ENCODE measurements at regions of chr9 and their contacts with region 1.

Region 1: DNA sequence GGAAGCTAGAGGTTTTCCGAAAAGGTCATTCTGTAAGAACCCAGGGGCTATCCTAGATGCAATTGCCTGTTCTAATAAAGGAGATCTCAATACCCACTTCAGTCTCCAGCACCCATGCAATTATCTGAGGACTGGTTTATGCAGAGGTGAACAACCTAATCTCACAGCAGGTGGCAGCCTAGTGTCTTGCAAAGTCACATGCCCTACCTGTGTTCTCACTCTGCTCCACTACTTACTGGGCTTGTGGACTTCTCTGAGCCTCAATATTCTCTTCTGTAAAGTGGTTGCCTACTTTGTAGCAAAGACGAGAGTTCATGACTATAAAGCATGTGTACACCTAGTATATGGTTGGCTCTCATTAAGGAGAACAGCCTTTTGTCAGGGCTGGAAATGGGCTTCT is 21.0 kb upstream of the ALDH1B1 start:
- DNase-seq: no peak
- ATAC-seq: peak in 1 of 4 donors; percentile 39
- H3K4me3 ChIP-seq: no peak overlapping the region
- H3K27ac ChIP-seq: no peak overlapping the region
- H3K4me1 ChIP-seq: no peaks in the 10 kb centered on the region
- H3K27me3 ChIP-seq: no peaks in the 10 kb centered on the region
- CTCF ChIP-seq: peak in 1 of 12 donors; percentile 16
- POLR2A ChIP-seq: no peak

Region 2: DNA sequence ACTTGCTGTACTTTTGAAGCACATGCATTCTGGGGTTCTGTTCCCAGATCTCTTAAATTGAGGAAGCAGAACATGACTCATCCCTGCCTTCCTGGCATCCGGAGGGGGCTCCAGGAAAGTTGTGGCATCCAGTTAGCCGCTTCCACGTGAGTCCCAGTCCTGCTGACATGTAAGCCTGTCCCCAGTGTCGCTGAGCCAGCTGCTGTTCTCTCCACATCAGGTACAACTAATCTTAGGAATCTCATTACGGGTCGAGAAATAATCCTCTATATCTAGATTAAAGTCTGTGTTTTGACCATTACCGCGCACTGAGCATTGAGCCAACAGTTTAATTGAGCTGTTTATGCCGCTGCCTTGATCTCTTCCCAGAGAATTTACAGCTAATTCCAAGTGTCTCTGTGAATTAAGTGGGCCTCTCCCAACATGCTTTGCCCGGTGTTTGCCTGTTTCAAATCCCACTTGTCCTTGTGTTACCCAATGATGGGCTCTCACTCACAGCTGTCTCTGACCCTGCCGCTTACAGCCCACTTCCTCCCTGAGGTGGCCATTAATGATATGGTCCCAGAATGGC is 291.9 kb before region 1 on chr9:
- intact Hi-C with region 1: loop called in 2 of 10 experiments (anchors 5 to 10 kb)
- DNase-seq: peak in 2 of 5 donors; percentile 25 to 59
- ATAC-seq: peak in 3 of 4 donors; percentile 19 to 51 (median 38)
- H3K4me3 ChIP-seq: no peak overlapping the region
- H3K27ac ChIP-seq: peak overlapping the region in 1 of 12 donors; percentile 33
- H3K4me1 ChIP-seq: peaks cover 0 to 49% (median 11%) of the 10 kb centered on the region in 12 donors
- H3K27me3 ChIP-seq: no peaks in the 10 kb centered on the region
- CTCF ChIP-seq: no peak
- POLR2A ChIP-seq: no peak

Region 3: GRCh38 chr9:38318759-38319495 is 52.6 kb before region 1 on chr9:
- intact Hi-C with region 1: loop called in 1 of 10 experiments (anchors 10 kb)
- DNase-seq: no peak
- ATAC-seq: peak in 2 of 4 donors; percentile 34 to 37
- H3K4me3 ChIP-seq: peak overlapping the region in 4 of 12 donors; percentile 3 to 28 (median 19)
- H3K27ac ChIP-seq: peak overlapping the region in 1 of 12 donors; percentile 22
- H3K4me1 ChIP-seq: peaks cover 0 to 9% (median 0%) of the 10 kb centered on the region in 12 donors
- H3K27me3 ChIP-seq: no peaks in the 10 kb centered on the region
- CTCF ChIP-seq: no peak
- POLR2A ChIP-seq: no peak

Region 4: DNA sequence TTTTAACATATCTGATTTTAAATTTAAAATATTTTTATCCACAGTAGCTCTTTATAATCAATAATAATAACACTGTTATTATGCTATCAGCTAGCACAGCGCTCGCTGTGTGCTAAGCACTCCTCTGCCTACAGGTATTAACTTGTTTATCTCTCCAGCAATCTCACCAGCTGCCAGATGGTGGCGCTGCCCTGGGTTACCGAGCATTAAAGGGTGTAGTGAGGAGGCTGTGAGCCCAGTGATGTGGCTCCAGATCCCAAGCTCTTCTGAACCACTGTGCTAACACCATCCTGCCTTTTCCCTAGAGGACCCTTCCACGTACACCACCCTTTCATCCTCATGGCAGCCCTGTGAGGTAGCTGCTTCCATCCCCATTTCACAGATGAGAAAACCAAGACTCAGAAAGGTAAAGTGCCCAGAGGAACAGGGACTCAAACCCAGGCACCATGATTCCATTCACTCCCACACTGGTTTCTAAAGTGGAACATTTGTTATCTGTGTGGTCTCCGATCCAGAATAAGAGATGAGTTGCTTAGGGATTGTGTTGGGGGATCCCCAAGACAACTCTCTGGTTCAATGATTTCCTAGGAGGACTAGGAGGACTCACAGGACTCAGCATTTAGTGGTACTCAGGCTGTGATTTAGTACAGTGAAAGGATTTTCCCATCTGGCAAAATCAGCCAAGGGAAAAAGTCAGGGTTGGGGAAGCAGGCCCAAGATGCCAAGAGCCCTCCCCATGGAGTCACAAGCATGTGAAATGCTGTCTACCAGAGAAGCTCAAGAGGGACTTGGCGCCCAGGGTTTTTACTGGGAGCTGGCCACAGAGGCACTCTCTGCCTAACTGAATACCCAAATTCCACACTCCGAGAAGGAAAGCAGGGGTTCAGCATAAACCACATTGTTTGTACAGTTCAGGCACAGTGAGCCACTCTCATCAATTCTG is 45.8 kb after region 1 on chr9:
- intact Hi-C with region 1: no loop called
- DNase-seq: no peak
- ATAC-seq: no peak
- H3K4me3 ChIP-seq: no peak overlapping the region
- H3K27ac ChIP-seq: no peak overlapping the region
- H3K4me1 ChIP-seq: no peaks in the 10 kb centered on the region
- H3K27me3 ChIP-seq: peaks cover 0 to 42% (median 11%) of the 10 kb centered on the region in 9 donors
- CTCF ChIP-seq: peak in 7 of 12 donors; percentile 14 to 37 (median 30)
- POLR2A ChIP-seq: no peak

Region 5: GRCh38 chr9:38432922-38433510 is 61.5 kb after region 1 on chr9:
- intact Hi-C with region 1: loop called in 1 of 10 experiments (anchors 10 kb)
- DNase-seq: no peak
- ATAC-seq: peak in 1 of 4 donors; percentile 19
- H3K4me3 ChIP-seq: no peak overlapping the region
- H3K27ac ChIP-seq: no peak overlapping the region
- H3K4me1 ChIP-seq: no peaks in the 10 kb centered on the region
- H3K27me3 ChIP-seq: peaks cover 0 to 19% (median 0%) of the 10 kb centered on the region in 9 donors
- CTCF ChIP-seq: peak; percentile 26 to 67 (median 54)
- POLR2A ChIP-seq: no peak

Region 6: DNA sequence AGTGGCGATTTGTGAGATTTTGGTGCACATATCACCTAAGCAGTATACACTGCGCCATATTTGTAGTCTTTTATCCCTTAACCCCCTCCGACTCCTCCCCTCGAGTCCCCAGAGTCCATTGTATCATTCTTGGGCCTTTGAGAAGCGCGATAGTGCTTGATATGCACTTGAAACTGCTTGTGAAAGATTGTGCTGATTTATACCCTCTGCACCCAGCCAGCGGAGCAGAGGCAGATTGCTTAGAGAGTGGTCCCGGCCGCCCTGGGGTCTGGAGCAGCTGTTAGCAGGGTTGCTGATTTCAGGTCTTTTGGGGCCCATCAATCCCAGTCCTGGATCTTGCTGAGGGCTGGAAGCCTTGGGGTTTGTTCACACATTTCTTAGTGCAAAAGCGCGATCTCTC is 361.4 kb after region 1 on chr9:
- intact Hi-C with region 1: no loop called
- DNase-seq: no peak
- ATAC-seq: no peak
- H3K4me3 ChIP-seq: no peak overlapping the region
- H3K27ac ChIP-seq: no peak overlapping the region
- H3K4me1 ChIP-seq: no peaks in the 10 kb centered on the region
- H3K27me3 ChIP-seq: no peaks in the 10 kb centered on the region
- CTCF ChIP-seq: no peak
- POLR2A ChIP-seq: no peak